CD4-positive, alpha-beta memory T cell (primary cell): ENCODE measurements at regions of chr1 and their contacts with region 1.

Region 1: GRCh38 chr1:53945433-53946251 is at the start of gene IFT25:
- DNase-seq: peak; percentile 97 to 100 (median 97)
- H3K4me3 ChIP-seq: peak within 1 kb of the TSS; percentile 63 to 87
- H3K4me3 Mint-ChIP-seq: peak within 1 kb of the TSS; percentile 93 to 99 (median 96)
- H3K27ac ChIP-seq: peak within 1 kb of the TSS; percentile 82
- H3K27ac Mint-ChIP-seq: peak within 1 kb of the TSS; percentile 85 to 98 (median 95)
- H3K4me1 ChIP-seq: peaks cover 44% of the 10 kb centered on the region
- H3K4me1 Mint-ChIP-seq: peaks cover 27 to 63% (median 46%) of the 10 kb centered on the region in 4 donors
- H3K27me3 ChIP-seq: no peaks in the 10 kb centered on the region
- H3K27me3 Mint-ChIP-seq: no peaks in the 10 kb centered on the region
- total RNA-seq, gene IFT25: 47.2 to 50.3 TPM

Region 2: GRCh38 chr1:53860967-53861411 is 84.7 kb before region 1 on chr1:
- CTCF ChIA-PET with region 1: interaction called, 82 read pairs
- POLR2A ChIA-PET with region 1: interaction called, 5 read pairs
- intact Hi-C with region 1: loop called (anchors 1 kb)
- DNase-seq: peak; percentile 49 to 59 (median 56)
- H3K4me3 ChIP-seq: no peak overlapping the region
- H3K4me3 Mint-ChIP-seq: no peak overlapping the region
- H3K27ac ChIP-seq: no peak overlapping the region
- H3K27ac Mint-ChIP-seq: peak overlapping the region in 1 of 7 donors; percentile 25
- H3K4me1 ChIP-seq: no peaks in the 10 kb centered on the region
- H3K4me1 Mint-ChIP-seq: peaks cover 0 to 16% (median 4%) of the 10 kb centered on the region in 4 donors
- H3K27me3 ChIP-seq: no peaks in the 10 kb centered on the region
- H3K27me3 Mint-ChIP-seq: no peaks in the 10 kb centered on the region

Region 3: GRCh38 chr1:53889304-53890298 is 56.0 kb before region 1 on chr1 and contains the start of gene YIPF1:
- CTCF ChIA-PET with region 1: interaction called, 5 read pairs
- POLR2A ChIA-PET with region 1: interaction called, 19 read pairs
- intact Hi-C with region 1: loop called (anchors 1 kb)
- DNase-seq: peak; percentile 82 to 86 (median 84)
- H3K4me3 ChIP-seq: peak within 1 kb of the TSS; percentile 59 to 79
- H3K4me3 Mint-ChIP-seq: peak within 1 kb of the TSS; percentile 92 to 98 (median 96)
- H3K27ac ChIP-seq: peak within 1 kb of the TSS; percentile 50
- H3K27ac Mint-ChIP-seq: peak within 1 kb of the TSS; percentile 89 to 96 (median 94)
- H3K4me1 ChIP-seq: peaks cover 28% of the 10 kb centered on the region
- H3K4me1 Mint-ChIP-seq: peaks cover 28 to 49% (median 38%) of the 10 kb centered on the region in 4 donors
- H3K27me3 ChIP-seq: no peaks in the 10 kb centered on the region
- H3K27me3 Mint-ChIP-seq: peaks cover 0 to 2% of the 10 kb centered on the region in 2 donors
- total RNA-seq, gene YIPF1: 14.8 to 15.2 TPM

Region 4: DNA sequence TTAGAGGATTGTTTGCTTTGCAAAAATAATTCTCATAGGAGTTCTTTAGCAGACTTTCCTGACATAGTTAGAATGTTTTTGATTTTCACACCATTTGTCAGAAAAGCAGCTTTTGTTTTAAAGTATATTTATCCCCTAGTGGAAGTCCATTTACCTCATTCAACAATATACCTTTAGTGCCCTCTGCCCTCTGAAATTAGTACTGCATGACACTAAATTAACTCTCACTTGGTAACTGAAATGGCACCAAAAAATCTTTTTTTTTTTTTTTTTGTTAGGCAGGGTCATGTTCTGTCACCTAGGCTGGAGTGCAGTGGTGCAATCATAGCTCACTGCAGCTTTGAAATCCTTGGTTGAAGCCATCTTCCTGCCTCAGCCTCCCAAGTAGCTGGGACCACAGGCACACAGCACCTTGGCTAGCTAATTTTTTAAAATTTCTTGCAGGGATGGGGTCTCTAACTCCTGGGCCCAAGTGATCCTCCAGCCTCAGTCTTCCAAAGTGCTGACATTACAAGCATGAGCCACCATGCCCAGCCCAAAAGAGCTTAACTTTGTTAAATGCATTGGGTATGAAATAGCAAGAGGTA is 14.1 kb after region 1 on chr1:
- CTCF ChIA-PET with region 1: interaction called, 32 read pairs
- POLR2A ChIA-PET with region 1: interaction called, 9 read pairs
- intact Hi-C with region 1: no loop called
- DNase-seq: peak; percentile 41 to 61 (median 55)
- H3K4me3 ChIP-seq: no peak overlapping the region
- H3K4me3 Mint-ChIP-seq: no peak overlapping the region
- H3K27ac ChIP-seq: no peak overlapping the region
- H3K27ac Mint-ChIP-seq: no peak overlapping the region
- H3K4me1 ChIP-seq: no peaks in the 10 kb centered on the region
- H3K4me1 Mint-ChIP-seq: peaks cover 0 to 6% (median 2%) of the 10 kb centered on the region in 4 donors
- H3K27me3 ChIP-seq: no peaks in the 10 kb centered on the region
- H3K27me3 Mint-ChIP-seq: no peaks in the 10 kb centered on the region

Region 5: GRCh38 chr1:54764133-54764921 is 818.7 kb after region 1 on chr1 and contains the start of gene PARS2:
- CTCF ChIA-PET with region 1: no interaction called
- POLR2A ChIA-PET with region 1: no interaction called
- intact Hi-C with region 1: loop called (anchors 1 kb)
- DNase-seq: peak; percentile 92 to 98 (median 98)
- H3K4me3 ChIP-seq: peak within 1 kb of the TSS; percentile 92 to 100
- H3K4me3 Mint-ChIP-seq: peak within 1 kb of the TSS; percentile 92 to 98 (median 94)
- H3K27ac ChIP-seq: peak within 1 kb of the TSS; percentile 71
- H3K27ac Mint-ChIP-seq: peak within 1 kb of the TSS; percentile 84 to 97 (median 93)
- H3K4me1 ChIP-seq: peaks cover 11% of the 10 kb centered on the region
- H3K4me1 Mint-ChIP-seq: peaks cover 8 to 27% (median 19%) of the 10 kb centered on the region in 4 donors
- H3K27me3 ChIP-seq: no peaks in the 10 kb centered on the region
- H3K27me3 Mint-ChIP-seq: no peaks in the 10 kb centered on the region
- total RNA-seq, gene PARS2: 5.0 to 6.0 TPM